PC-3 (cell line): ENCODE measurements at regions of chr15 and their contacts with region 1.

Region 1: DNA sequence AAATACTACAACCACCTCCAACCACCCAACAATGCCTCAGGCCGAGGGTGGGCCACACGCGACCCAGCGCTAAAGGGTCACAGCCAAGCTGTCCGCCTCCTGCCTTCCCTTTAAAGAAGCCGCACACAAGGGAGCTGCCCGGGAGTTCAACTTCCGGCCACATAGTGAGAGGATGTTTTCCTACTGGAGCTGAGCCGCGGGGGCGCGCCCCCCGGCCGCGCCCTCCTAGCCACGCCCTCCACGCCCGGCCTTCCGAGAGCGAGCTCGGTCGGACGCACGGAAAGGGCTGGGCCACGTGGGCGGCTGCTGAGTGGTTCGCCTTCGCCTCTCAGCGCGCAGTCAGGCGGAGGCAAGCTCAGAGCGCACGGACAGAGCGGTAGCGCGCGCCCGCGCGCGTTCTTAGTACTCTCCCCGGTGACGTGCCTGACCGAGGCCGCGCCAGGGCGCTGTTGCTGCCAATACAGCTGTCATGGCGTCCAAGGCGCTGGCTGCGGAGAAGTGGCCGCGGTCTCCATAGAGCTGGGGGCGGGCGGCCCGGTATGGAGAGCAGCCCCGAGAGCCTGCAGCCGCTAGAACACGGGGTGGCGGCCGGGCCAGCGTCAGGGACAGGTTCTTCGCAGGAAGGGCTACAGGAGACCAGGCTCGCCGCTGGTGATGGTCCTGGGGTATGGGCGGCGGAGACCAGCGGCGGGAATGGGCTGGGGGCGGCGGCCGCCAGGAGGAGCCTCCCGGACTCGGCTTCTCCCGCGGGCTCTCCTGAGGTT is at the start of gene MINDY2:
- DNase-seq: peak; percentile 97
- ATAC-seq: peak; percentile 93
- H3K4me3 ChIP-seq: peak within 1 kb of the TSS; percentile 96
- H3K27ac ChIP-seq: peak within 1 kb of the TSS; percentile 60
- H3K4me1 ChIP-seq: peaks cover 15% of the 10 kb centered on the region
- H3K27me3 ChIP-seq: no peaks in the 10 kb centered on the region
- CTCF ChIP-seq: peak; percentile 24; the same call in 1 of the 2 replicates
- total RNA-seq, gene MINDY2: 4.7 and 9.3 TPM in 2 replicates

Region 2: GRCh38 chr15:58227706-58228543 is 543.1 kb before region 1 on chr15:
- CTCF ChIA-PET with region 1: no interaction called
- POLR2A ChIA-PET with region 1: no interaction called
- intact Hi-C with region 1: loop called (anchors 5 kb)
- DNase-seq: peak; percentile 83
- ATAC-seq: peak; percentile 63; the same call in 1 of the 2 replicates
- H3K4me3 ChIP-seq: no peak overlapping the region
- H3K27ac ChIP-seq: no peak overlapping the region
- H3K4me1 ChIP-seq: peaks cover 6% of the 10 kb centered on the region
- H3K27me3 ChIP-seq: no peaks in the 10 kb centered on the region
- CTCF ChIP-seq: peak; percentile 88

Region 3: DNA sequence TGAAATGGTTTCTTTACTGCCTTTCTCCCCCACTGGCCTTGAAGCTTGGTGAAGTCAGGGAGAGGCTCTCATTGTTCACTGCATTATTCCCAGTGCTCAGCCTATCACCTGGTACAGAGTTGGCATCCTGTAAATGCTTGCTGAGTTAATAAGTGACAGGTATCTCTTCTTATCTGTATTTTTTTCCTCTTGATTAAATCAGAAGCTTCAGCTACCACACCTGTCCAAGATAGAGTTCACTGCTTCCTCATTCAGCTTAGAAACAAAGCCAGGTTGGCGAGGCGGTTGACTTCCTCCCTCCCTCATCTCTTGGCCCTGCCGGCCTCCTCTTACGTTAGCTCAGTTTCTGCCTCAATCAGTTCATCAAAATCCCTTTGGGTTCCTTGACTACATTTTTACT is 196.4 kb before region 1 on chr15:
- CTCF ChIA-PET with region 1: no interaction called
- POLR2A ChIA-PET with region 1: no interaction called
- intact Hi-C with region 1: no loop called
- DNase-seq: no peak
- ATAC-seq: no peak
- H3K4me3 ChIP-seq: no peak overlapping the region
- H3K27ac ChIP-seq: no peak overlapping the region
- H3K4me1 ChIP-seq: no peaks in the 10 kb centered on the region
- H3K27me3 ChIP-seq: no peaks in the 10 kb centered on the region
- CTCF ChIP-seq: no peak

Region 4: GRCh38 chr15:58724466-58724865 is 46.6 kb before region 1 on chr15:
- CTCF ChIA-PET with region 1: no interaction called
- POLR2A ChIA-PET with region 1: no interaction called
- intact Hi-C with region 1: no loop called
- DNase-seq: no peak
- ATAC-seq: no peak
- H3K4me3 ChIP-seq: no peak overlapping the region
- H3K27ac ChIP-seq: no peak overlapping the region
- H3K4me1 ChIP-seq: no peaks in the 10 kb centered on the region
- H3K27me3 ChIP-seq: no peaks in the 10 kb centered on the region
- CTCF ChIP-seq: no peak

Region 5: DNA sequence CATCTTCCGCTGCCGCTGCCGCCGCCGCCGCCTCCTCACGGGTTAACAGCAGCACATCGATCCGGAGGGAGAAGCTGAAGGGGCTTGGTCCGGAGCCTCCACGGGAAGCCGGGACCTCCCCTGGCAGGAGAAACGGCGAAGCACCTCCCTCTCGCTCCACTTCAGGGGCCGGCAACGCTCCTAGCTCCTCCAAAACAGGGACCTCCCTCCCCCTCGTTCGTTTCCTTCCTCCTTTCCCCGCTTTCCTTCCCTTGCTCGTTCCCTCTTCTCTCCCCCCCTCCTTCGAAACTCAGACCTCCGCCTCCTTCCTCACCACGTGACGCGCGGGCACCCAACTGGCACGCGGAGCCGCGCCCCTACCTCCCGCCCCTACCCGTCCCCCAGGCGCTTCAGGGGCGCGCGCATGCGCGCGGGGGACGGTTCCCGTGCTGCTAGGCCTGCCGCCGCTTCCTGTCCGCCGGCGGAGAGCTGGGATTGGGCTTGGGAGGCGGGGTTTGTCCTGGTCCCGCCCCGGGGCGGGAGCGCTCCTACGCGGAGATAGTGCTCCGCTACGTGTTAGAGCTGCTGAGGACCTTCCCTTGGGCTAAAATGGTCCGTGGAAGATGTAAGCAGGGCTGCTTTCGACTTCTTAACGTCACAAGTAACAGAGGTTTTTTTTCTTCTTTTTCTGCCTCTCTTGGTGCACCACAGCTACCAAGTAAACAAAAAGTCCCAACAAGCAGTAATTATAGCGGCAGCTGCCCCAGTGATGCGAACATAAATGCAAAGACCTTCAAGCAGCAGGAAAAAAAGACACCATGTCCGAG is 21.3 kb before region 1 on chr15 and contains the start of gene ADAM10:
- CTCF ChIA-PET with region 1: interaction called, 5 read pairs
- POLR2A ChIA-PET with region 1: interaction called, 23 read pairs
- intact Hi-C with region 1: loop called (anchors 1 kb)
- DNase-seq: peak; percentile 98
- ATAC-seq: peak; percentile 93
- H3K4me3 ChIP-seq: peak within 1 kb of the TSS; percentile 80
- H3K27ac ChIP-seq: peak within 1 kb of the TSS; percentile 74
- H3K4me1 ChIP-seq: 0 out of 2 replicates have a peak, but pooled peaks cover 3% of the 10 kb centered on the region
- H3K27me3 ChIP-seq: no peaks in the 10 kb centered on the region
- CTCF ChIP-seq: no peak
- total RNA-seq, gene ADAM10: 91.3 and 96.8 TPM in 2 replicates

Region 6: GRCh38 chr15:58873267-58873666 is 102.2 kb after region 1 on chr15:
- CTCF ChIA-PET with region 1: no interaction called
- POLR2A ChIA-PET with region 1: no interaction called
- intact Hi-C with region 1: no loop called
- DNase-seq: peak; percentile 58
- ATAC-seq: peak; percentile 42
- H3K4me3 ChIP-seq: no peak overlapping the region
- H3K27ac ChIP-seq: no peak overlapping the region
- H3K4me1 ChIP-seq: peaks cover 5% of the 10 kb centered on the region; the same call in 1 of the 2 replicates
- H3K27me3 ChIP-seq: no peaks in the 10 kb centered on the region
- CTCF ChIP-seq: no peak

Region 7: DNA sequence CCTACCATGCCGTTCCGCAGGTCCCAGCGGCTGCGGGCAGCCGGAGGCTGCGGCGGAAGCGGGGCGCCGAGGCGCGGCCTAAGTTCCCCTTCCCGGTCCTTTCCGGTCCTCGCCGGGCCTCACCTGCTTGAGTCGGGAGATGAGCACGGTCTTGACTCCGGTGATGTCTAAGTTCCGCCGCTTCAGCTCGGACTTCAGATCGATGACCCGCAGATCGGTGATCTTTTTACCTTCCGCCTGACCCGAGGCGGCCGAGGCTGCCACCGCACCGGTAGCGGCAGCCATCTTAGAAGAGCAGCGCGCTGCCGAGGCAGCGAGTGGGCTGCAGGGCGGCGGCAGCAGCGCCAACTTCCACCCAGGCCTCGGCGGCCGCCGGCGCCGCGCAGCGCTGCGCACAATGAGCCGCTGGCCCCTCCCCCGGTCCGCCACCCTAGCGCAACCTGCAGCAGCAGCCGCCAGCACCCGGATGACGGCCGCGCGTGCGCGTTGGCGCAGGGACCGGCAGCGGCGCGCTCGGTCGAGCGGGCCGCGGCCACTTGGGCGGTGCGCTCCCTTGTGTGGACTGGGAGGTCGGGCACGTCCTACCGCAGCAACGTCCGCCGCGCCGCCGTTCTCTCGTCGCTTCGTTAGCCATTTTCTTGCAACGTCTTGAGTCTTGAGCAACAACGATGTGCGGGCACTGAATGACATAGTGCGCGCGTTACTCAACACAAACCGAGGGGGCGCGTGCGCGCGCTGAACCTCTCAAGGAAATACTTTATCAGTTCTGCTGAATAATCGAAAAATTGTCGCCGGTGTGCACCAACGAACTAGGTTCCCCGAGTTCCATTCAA is 162.5 kb after region 1 on chr15 and contains the start of gene SLTM:
- CTCF ChIA-PET with region 1: no interaction called
- POLR2A ChIA-PET with region 1: no interaction called
- intact Hi-C with region 1: loop called (anchors 10 kb)
- DNase-seq: peak; percentile 90
- ATAC-seq: peak; percentile 91
- H3K4me3 ChIP-seq: peak within 1 kb of the TSS; percentile 96
- H3K27ac ChIP-seq: peak within 1 kb of the TSS; percentile 92
- H3K4me1 ChIP-seq: peaks cover 17% of the 10 kb centered on the region
- H3K27me3 ChIP-seq: no peaks in the 10 kb centered on the region
- CTCF ChIP-seq: peak; percentile 22; the same call in 1 of the 2 replicates
- total RNA-seq, gene SLTM: 103 and 107 TPM in 2 replicates